PC-3 (cell line): ENCODE measurements at regions of chr5 and their contacts with region 1.

Region 1: DNA sequence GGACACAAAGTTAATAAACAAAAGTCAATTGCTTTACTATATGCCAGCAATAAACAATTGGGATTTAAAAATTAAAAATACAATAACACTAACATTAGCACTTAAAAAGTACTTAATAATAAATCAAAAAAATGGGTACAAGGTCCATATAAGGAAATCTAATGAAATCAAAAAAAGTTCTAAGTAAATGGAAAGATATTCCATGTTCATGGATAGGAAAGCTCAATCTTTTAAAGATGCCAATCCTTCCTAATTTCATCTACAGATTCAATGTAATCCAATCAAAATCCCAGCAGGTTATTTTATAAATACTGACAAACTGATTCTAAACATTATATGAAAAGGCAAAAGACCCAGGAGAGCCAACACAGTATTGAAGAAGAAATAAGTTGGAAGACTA is 41.9 kb downstream of the BTNL9 start:
- DNase-seq: no peak
- ATAC-seq: no peak
- H3K4me3 ChIP-seq: no peak overlapping the region
- H3K27ac ChIP-seq: no peak overlapping the region
- H3K4me1 ChIP-seq: no peaks in the 10 kb centered on the region
- H3K27me3 ChIP-seq: peaks cover 11% of the 10 kb centered on the region
- CTCF ChIP-seq: no peak

Region 2: DNA sequence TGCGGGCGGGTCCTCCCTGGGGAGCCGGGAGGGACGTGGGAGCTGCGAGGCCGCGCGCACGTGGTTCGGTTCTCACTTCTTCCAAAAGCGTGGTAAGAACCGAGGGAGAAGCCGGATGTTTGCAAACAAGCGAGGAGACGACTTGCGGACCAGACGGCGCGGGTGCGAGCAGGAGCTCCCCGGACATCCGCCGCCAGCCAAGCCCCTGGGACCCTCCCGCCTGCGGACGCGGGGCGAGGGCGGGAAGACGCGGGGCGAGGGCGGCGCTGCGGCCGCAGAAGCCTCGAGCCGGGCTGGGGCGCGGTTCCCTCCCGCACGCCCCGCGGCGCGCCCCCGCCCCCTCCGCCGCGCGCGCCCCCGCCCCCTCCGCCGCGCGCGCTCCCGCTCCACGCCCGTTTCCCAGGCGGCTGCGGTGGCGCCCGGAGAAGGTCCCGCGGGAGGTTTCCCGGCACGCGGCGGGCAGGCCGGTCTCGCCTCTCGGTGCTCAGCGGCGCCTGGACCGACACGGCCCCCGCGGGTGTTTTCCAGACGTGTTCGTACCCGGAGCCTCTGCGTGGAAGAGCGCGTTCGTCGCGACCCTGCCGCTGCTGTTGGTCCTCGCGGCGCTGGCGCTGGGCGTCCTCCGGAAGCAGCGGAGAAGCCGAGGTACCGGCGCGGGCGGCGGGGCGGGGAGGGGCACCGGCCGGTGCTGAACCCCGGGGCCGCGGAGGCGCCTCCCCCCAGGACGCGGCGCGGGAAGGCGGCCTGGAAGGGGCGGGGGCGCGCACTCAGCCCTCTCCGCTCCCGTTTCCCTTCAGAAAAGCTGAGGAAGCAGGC is 29.1 kb before region 1 on chr5:
- CTCF ChIA-PET with region 1: no interaction called
- POLR2A ChIA-PET with region 1: interaction called, 10 read pairs
- intact Hi-C with region 1: no loop called
- DNase-seq: peak; percentile 21
- ATAC-seq: peak; percentile 56
- H3K4me3 ChIP-seq: peak overlapping the region; percentile 74
- H3K27ac ChIP-seq: no peak overlapping the region
- H3K4me1 ChIP-seq: 0 out of 2 replicates have a peak, but pooled peaks cover 3% of the 10 kb centered on the region
- H3K27me3 ChIP-seq: peaks cover 29% of the 10 kb centered on the region
- CTCF ChIP-seq: no peak